OCI-LY7 (cell line): ENCODE measurements at regions of chr19 and their contacts with region 1.

Region 1: GRCh38 chr19:37077934-37078725 is at the start of gene ZNF420:
- DNase-seq: peak; percentile 98
- H3K4me3 ChIP-seq: peak within 1 kb of the TSS; percentile 88
- H3K27ac ChIP-seq: peak within 1 kb of the TSS; percentile 46
- H3K4me1 ChIP-seq: peaks cover 13% of the 10 kb centered on the region
- CTCF ChIP-seq: no peak
- total RNA-seq, gene ZNF420: 8.8 and 14.0 TPM in 2 replicates

Region 2: DNA sequence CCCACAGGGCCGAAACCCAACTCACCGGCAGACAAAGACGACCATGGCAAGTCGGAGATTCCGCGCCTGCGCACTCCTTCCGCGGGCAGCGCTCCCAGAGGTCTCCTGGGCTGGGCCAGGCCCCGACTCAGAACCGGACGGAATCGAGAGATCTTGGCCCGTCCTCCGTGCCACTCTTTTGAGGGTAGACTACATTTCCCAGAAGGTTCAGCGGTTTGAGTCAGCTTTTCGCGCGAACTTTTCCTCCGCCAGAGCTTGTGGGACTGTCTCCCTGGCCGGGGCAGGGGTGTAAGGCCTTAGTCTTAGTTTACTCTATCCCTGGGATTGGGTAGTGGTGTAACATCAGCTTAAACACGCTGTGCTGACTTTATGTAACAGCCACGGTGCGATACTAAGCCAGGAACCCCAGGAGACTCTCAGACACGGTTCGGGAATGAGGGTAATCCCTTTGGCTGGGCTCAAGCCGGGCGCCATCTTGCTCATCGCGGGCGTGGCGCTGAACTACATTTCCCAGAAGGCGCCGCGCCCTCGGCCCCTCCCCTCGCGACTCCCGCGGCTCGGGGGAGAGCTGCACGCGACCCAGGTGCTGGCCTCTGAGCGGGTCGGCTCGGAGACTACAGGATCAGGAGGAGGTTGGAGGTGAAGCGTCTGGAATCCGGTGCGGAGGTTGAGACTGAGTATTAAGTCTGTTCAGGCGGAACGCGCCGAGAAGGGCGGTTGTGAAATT is 549.8 kb before region 1 on chr19 and contains the start of gene ZNF260:
- CTCF ChIA-PET with region 1: no interaction called
- POLR2A ChIA-PET with region 1: no interaction called
- intact Hi-C with region 1: loop called (anchors 2 kb)
- DNase-seq: peak; percentile 94
- H3K4me3 ChIP-seq: peak within 1 kb of the TSS; percentile 84
- H3K27ac ChIP-seq: peak within 1 kb of the TSS; percentile 66
- H3K4me1 ChIP-seq: peaks cover 18% of the 10 kb centered on the region
- CTCF ChIP-seq: no peak
- total RNA-seq, gene ZNF260: 9.9 and 11.1 TPM in 2 replicates

Region 3: DNA sequence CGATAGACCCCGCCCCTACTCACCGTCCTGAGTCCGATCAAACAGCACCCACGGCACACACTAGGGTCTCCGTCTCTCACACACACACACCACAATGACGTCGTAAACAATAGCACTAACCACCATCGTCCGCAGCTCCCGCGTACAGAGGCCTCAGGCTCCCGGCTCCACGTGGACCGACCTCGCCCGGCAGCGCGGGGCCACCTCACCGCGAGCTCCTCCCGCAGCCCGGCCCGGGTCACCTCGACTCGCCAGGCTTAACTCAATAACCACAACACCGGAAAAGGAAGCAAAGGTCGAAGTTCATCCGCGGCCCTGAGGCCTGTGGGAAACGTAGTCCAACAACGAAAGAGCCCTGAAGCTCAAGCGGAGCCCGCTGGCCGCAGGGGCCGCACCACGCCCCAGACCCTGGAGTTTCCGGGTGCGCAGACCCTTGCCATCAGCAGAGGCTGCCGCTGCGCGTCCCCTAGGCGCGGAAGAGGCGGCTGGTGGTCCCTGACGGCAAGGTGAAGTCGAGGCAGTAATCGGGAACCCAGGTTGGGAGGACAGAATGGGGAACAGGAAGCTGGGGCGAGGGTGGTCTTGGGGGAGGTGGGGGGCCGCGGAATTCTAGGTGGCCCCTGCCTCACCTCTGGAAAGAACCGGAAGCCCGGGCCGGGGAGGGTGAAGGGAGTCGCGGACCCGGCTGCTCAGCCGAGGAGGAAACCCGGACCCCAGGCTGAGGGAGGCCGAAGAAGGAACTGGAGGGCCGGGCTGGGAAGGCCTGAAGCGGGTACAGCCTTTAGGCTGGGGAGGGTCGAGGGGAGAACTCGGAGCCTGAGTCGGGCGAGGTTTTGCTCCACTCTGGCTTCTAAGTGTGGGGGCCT is 504.9 kb before region 1 on chr19 and contains the start of gene ZNF529:
- CTCF ChIA-PET with region 1: no interaction called
- POLR2A ChIA-PET with region 1: no interaction called
- intact Hi-C with region 1: loop called (anchors 2 kb)
- DNase-seq: peak; percentile 94
- H3K4me3 ChIP-seq: peak within 1 kb of the TSS; percentile 91
- H3K27ac ChIP-seq: peak within 1 kb of the TSS; percentile 35
- H3K4me1 ChIP-seq: peaks cover 19% of the 10 kb centered on the region
- CTCF ChIP-seq: 0 out of 2 replicates have a peak, but pooled peaks have one; percentile 14
- total RNA-seq, gene ZNF529: 9.0 and 11.6 TPM in 2 replicates

Region 4: DNA sequence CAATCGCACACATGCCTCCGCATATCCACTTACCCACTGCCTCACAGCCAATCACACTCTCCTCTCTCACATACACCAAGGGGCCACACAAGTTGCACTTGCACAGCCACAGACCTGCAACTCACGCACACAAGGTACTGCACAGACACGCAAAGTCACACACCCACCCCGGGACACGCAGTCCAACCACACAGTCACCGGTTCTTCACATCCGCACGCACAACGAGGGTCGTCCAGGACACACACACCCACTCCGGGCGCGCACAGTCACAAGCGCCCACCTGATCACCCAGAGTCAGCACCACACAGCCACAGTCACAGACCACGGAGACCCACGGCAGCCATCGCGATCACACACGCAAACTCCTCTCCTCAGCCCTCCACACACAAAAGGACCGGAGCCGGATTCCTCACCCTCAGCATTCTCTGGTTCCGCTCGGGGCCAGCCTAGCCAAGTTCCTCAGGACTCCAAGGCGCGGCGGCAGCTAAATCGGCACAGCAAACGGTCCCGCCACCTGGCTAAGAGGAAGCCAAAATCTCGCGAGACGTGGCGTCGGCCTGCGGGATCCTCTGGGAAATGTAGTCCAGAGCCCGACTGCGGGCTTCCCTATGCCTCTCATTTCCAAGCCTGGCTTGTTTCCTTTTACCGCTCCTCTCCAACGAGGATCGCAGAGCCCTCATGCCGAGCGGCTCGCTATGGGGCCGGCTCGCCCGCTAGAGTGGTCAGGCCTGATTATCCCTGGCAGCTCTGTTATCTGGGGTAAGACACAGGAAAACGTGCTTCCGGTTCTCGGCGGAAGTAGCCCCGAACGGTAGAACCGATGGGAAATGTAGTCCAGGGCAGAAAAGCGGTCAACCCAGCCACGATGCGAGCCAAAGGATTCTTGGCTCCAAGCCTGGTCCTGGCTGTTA is 305.6 kb before region 1 on chr19 and contains the start of gene ZNF850:
- CTCF ChIA-PET with region 1: no interaction called
- POLR2A ChIA-PET with region 1: no interaction called
- intact Hi-C with region 1: loop called (anchors 5 kb)
- DNase-seq: peak; percentile 98
- H3K4me3 ChIP-seq: peak within 1 kb of the TSS; percentile 73
- H3K27ac ChIP-seq: peak within 1 kb of the TSS; percentile 47
- H3K4me1 ChIP-seq: peaks cover 10% of the 10 kb centered on the region
- CTCF ChIP-seq: no peak
- total RNA-seq, gene ZNF850: 3.1 and 10.6 TPM in 2 replicates

Region 5: GRCh38 chr19:37172368-37173366 is 94.5 kb after region 1 on chr19 and contains the start of gene ZNF585A:
- CTCF ChIA-PET with region 1: no interaction called
- POLR2A ChIA-PET with region 1: no interaction called
- intact Hi-C with region 1: loop called (anchors 2 kb)
- DNase-seq: peak; percentile 97
- H3K4me3 ChIP-seq: peak within 1 kb of the TSS; percentile 99
- H3K27ac ChIP-seq: peak within 1 kb of the TSS; percentile 47
- H3K4me1 ChIP-seq: peaks cover 5% of the 10 kb centered on the region
- CTCF ChIP-seq: peak; percentile 22; the same call in 1 of the 2 replicates
- total RNA-seq, gene ZNF585A: 9.9 and 11.9 TPM in 2 replicates